Activated CD4-positive, alpha-beta memory T cell treated with anti-CD3 and anti-CD28 coated beads for 36 hours (primary cell): ENCODE measurements at regions of chr6 and their contacts with region 1.

Region 1: DNA sequence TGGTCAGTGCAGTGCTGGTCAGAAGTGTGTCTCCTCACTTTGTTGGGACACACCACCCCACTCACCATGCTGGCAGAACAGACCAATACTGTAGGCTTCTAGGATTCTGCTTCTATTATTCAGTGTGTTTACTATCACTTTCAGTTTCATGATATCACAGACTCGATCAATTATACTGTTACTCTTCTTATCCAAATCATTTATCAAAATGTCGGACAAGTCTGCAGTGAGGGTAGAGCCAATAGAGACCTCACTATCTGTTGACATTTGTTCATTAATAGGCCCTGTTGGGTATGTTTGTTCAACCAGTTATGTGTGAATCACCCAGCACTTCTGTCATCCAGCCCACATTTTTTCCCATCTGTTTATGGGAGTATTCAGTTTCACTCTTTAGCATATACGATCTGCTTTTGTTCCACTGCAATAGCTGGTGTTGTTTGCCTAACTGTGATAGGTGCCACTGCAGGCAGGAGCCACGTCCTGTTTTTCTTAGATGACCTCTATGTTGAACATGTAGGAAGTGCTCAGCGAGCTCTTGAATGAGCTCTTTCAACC is 140.1 kb downstream of the NRN1 start:
- DNase-seq: peak; percentile 44
- H3K4me3 Mint-ChIP-seq: peak overlapping the region; percentile 73
- H3K27ac Mint-ChIP-seq: peak overlapping the region; percentile 79
- H3K4me1 Mint-ChIP-seq: peaks cover 49% of the 10 kb centered on the region
- H3K27me3 Mint-ChIP-seq: no peaks in the 10 kb centered on the region

Region 2: DNA sequence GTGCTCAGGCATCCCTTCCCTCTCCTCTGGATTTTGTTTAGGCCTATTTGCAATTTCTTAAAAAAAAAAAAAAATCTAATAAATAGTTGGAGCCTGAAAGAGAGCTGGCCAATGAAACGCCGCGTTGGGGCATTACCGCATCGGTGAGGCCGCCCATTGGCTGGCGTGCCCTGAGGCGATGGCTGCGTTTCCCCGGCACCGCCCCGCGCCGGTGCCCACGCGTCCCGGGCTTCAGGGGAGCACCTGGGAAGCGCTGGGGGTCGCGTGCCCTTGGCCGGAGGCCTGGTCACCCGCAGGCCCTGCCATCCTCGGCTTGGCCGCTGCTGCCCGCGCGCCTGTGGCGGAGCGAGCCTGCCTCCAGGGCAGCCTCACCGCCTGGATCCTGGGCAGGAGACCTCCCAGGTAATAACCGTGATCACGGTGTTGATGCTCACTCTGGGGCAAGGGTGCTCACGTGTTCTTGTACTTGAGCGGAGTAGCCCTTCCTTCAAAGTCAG is 15.3 kb before region 1 on chr6:
- CTCF ChIA-PET with region 1: no interaction called
- POLR2A ChIA-PET with region 1: no interaction called
- intact Hi-C with region 1: loop called (anchors 1 kb)
- DNase-seq: peak; percentile 82
- H3K4me3 Mint-ChIP-seq: peak overlapping the region; percentile 70
- H3K27ac Mint-ChIP-seq: no peak overlapping the region
- H3K4me1 Mint-ChIP-seq: peaks cover 9% of the 10 kb centered on the region
- H3K27me3 Mint-ChIP-seq: peaks cover 2% of the 10 kb centered on the region

Region 3: DNA sequence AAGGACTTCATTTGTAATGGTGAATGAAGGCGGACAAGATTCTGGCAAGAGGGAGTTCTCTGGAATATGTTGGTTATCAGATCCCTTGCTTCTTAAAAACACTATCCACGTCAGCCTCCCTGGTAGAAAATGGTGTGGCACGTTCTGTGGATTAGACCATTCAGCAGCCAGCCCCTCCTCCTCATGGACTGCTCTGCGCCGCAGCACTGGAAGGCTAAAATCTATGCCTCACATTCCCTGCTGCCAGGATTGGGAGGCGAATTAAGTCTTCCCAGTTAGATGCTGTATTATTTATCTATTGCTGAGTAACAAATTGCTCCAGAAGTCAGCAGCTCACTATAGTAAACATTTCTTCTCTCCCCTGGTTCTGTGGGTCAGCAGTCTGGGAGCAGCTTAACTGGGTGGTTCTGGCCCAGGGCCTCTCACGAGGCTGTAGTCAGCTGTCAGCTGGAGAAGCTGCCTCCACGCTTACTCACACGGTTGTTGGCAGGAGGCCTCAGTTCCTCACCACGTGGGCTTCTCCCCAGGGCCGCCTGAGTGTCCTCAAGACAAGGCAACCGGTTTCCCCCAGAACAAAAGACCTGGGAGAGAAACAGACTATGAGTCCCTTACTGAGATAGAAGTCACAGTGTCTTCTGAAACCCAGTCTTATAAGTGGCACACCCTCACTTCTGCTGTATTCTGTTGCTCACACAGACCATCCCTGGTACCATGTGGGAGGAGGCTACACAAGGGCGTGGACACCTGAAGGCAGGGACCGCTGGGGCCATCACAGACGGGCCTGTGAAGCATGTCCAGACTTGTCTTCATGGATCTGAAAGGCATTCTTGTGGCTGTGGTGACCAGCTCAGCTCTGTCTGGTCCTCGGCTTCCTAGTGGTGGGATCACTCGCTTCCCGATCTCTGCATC is 39.1 kb after region 1 on chr6:
- CTCF ChIA-PET with region 1: no interaction called
- POLR2A ChIA-PET with region 1: no interaction called
- intact Hi-C with region 1: no loop called
- DNase-seq: no peak
- H3K4me3 Mint-ChIP-seq: no peak overlapping the region
- H3K27ac Mint-ChIP-seq: no peak overlapping the region
- H3K4me1 Mint-ChIP-seq: no peaks in the 10 kb centered on the region
- H3K27me3 Mint-ChIP-seq: no peaks in the 10 kb centered on the region

Region 4: DNA sequence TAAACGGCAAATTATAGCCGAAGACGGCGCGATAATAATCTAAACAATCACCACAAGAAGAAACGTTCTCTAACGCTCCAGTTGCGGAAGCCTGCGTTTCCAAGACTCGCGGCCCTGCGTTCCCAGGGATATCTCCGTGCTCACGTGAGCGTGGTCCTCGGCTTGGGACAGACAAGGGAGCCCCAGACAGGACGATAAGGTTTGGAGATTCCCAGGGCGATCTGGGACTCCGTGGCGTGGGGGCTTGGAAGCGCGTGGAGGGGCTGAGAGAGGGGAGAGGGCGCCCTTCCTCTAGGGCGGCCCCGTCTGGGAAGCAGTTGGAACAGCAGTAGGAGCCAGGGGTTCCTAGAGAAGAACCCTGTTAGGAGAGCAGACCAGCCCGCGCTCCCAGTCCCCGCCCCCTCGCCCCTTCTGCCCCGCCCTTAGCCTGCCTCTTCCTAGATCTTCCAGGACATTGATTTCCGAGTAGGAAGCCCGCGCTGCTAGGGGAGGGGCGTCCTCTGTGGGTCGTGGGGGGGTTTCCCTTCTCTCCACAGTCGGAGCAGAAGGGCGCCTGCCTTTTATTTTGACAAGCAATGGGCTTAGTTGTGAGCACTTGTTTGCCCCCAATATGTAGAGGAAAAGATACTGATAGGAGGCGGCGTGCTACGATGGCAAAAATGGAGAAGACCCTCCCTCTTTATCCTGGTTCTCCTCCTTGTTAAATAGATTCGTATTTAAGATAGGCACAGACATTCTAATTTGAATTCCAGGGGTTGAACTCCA is 129.5 kb after region 1 on chr6:
- CTCF ChIA-PET with region 1: no interaction called
- POLR2A ChIA-PET with region 1: no interaction called
- intact Hi-C with region 1: loop called (anchors 5 kb)
- DNase-seq: peak; percentile 31
- H3K4me3 Mint-ChIP-seq: peak overlapping the region; percentile 75
- H3K27ac Mint-ChIP-seq: no peak overlapping the region
- H3K4me1 Mint-ChIP-seq: peaks cover 41% of the 10 kb centered on the region
- H3K27me3 Mint-ChIP-seq: peaks cover 75% of the 10 kb centered on the region

Region 5: DNA sequence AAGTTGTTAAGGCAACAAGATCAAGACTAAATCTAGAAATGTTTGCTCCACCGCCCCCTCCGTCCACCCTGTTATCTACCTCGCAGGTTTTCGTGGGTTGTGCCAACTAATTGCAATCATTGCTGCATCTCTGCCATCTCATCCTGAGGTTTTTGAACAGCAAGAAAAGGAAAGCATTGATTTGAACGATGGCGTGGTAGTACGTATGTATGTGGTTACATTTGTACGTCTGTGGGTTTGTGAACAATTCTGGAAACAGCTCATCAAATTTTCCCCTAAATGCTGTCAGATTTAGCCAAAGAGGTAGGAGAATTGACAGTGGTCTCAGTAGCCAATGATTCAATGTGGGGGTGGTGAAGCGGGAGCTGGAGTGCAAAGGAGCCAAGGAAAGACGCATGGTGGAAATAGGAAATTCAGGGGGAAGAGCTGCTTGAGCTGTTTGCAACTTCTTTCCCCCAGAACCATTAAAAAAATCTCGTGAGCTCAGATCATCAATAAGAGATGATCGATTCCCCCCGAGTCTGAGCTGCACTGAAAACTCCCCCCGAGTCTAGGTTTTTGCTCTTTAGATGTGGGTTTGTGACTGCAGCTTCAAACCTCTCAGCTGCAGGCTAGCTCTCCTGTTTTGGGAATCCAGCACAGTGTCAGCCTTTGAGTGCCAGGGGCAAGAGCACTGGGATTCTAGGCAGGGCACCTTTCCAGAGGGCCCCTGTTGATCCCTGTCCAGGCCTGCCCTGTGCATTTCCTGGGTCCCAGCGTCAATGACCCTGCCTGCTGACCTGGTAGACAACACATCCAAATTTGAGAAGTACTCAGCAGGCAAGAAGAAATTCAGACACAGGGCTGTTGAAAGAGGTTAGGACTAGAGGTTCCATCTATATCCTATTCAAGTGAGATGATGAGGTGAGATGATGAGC is 649.3 kb after region 1 on chr6:
- CTCF ChIA-PET with region 1: no interaction called
- POLR2A ChIA-PET with region 1: no interaction called
- intact Hi-C with region 1: loop called (anchors 10 kb)
- DNase-seq: peak; percentile 80
- H3K4me3 Mint-ChIP-seq: no peak overlapping the region
- H3K27ac Mint-ChIP-seq: no peak overlapping the region
- H3K4me1 Mint-ChIP-seq: peaks cover 16% of the 10 kb centered on the region
- H3K27me3 Mint-ChIP-seq: peaks cover 77% of the 10 kb centered on the region